Activated CD4-positive, alpha-beta memory T cell treated with anti-CD3 and anti-CD28 coated beads for 36 hours (primary cell): ENCODE measurements at regions of chr10 and their contacts with region 1.

Region 1: DNA sequence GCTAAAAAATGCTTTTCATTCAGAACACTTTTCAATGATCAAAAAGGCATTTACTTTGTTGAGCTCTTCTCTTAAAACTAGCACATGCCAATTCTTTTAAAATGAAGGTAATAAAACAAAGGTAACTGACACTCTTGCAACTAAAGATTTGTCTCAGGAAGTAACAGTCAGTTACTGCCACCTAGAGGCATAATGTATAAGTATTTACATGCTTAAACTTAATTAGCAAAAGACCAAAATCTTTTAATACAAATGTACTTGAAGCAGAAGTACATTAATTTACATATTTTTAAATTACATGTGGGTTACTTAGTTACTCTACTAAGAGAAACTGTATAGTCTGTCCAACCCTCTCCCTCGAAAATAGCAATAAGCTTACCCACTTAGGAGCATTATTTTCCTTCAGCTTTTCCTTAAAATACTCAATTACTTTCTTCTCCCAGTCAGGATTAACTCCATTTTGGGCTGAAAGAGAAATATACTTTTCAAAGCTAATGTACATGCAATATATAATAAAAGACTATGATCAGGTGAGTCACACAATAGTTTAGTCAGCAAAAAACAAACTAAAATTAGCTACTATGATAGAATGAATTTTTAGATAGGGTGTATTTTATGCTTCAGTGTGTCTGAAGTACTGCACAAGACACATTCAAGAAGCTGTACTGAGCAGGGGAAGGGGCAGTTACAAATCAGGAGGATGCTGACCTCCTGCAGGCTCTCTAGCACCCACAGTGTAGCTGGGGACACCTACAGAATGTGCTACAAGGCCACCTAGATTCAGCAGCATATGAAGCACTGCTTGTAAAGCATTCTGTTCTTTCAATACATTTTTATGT is 13.0 kb downstream of the MCMBP start:
- DNase-seq: no peak
- H3K4me3 Mint-ChIP-seq: no peak overlapping the region
- H3K27ac Mint-ChIP-seq: no peak overlapping the region
- H3K4me1 Mint-ChIP-seq: peaks cover 42% of the 10 kb centered on the region
- H3K27me3 Mint-ChIP-seq: no peaks in the 10 kb centered on the region

Region 2: DNA sequence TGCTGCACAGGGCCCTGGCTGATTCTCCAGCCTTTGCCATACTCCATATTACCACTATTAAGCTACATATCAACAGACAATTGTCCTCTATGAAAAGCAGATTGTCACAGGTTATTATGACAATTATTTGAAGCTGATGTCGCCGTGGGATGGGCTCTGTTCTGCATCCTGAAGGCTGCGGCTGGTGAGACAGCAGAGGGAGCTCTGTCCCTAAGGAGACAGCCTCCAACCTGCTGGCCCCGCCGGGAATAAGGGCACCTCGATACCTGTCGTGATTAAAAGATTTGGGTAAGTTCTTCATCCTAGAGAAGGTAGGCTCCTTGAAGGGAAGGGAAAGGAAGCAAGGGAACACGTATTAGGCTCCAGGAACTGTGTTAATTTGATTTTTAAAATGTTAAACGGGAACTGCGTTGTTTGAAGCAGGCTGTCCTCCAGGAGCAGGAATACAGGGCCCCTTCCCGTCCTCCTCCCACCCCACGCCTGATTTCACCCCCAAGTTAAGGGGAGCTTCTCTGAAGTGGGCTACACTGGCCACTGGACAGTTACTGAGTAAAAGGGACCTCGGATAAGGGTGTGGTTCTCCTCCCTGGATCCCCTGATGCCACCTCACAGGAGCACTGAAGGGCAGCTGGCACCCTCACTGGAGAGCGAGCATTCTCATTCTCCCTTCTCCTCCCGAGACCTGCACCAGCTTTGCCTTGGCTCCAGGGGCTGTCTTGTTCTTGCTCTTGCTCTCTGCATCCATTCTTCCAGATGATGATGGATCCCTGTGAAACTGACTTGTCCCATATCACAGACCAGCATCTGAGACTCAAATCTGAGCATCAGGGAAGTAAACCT is 251.1 kb before region 1 on chr10:
- CTCF ChIA-PET with region 1: no interaction called
- POLR2A ChIA-PET with region 1: no interaction called
- intact Hi-C with region 1: loop called (anchors 5 kb)
- DNase-seq: peak; percentile 49
- H3K4me3 Mint-ChIP-seq: no peak overlapping the region
- H3K27ac Mint-ChIP-seq: no peak overlapping the region
- H3K4me1 Mint-ChIP-seq: peaks cover 7% of the 10 kb centered on the region
- H3K27me3 Mint-ChIP-seq: peaks cover 3% of the 10 kb centered on the region

Region 3: GRCh38 chr10:119725828-119726675 is 133.6 kb before region 1 on chr10 and contains the start of gene INPP5F:
- CTCF ChIA-PET with region 1: interaction called, 21 read pairs
- POLR2A ChIA-PET with region 1: no interaction called
- intact Hi-C with region 1: no loop called
- DNase-seq: peak; percentile 100
- H3K4me3 Mint-ChIP-seq: peak within 1 kb of the TSS; percentile 91
- H3K27ac Mint-ChIP-seq: peak within 1 kb of the TSS; percentile 76
- H3K4me1 Mint-ChIP-seq: peaks cover 42% of the 10 kb centered on the region
- H3K27me3 Mint-ChIP-seq: no peaks in the 10 kb centered on the region
- total RNA-seq, gene INPP5F: 12.8 to 13.6 TPM

Region 4: GRCh38 chr10:119750391-119751230 is 109.0 kb before region 1 on chr10:
- CTCF ChIA-PET with region 1: interaction called, 108 read pairs
- POLR2A ChIA-PET with region 1: no interaction called
- intact Hi-C with region 1: loop called (anchors 1 kb)
- DNase-seq: peak; percentile 70
- H3K4me3 Mint-ChIP-seq: no peak overlapping the region
- H3K27ac Mint-ChIP-seq: no peak overlapping the region
- H3K4me1 Mint-ChIP-seq: peaks cover 12% of the 10 kb centered on the region
- H3K27me3 Mint-ChIP-seq: no peaks in the 10 kb centered on the region

Region 5: GRCh38 chr10:119803264-119803663 is 56.4 kb before region 1 on chr10:
- CTCF ChIA-PET with region 1: interaction called, 10 read pairs
- POLR2A ChIA-PET with region 1: no interaction called
- intact Hi-C with region 1: no loop called
- DNase-seq: no peak
- H3K4me3 Mint-ChIP-seq: no peak overlapping the region
- H3K27ac Mint-ChIP-seq: no peak overlapping the region
- H3K4me1 Mint-ChIP-seq: peaks cover 15% of the 10 kb centered on the region
- H3K27me3 Mint-ChIP-seq: no peaks in the 10 kb centered on the region

Region 6: DNA sequence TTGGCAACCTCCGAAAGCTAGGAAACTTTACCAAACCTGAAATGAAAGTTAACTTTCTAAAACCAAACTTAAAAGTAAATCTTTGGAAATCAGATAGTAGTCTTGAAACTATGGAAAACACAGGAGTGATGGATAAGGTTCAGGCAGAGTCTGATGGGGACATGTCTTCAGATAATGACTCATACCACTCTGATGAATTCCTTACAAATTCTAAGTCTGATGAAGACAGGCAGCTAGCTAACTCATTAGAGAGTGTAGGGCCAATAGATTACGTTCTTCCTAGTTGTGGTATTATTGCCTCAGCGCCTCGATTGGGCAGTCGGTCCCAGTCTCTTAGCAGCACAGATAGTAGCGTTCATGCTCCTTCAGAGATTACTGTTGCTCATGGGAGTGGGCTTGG is 32.9 kb before region 1 on chr10:
- CTCF ChIA-PET with region 1: no interaction called
- POLR2A ChIA-PET with region 1: no interaction called
- intact Hi-C with region 1: no loop called
- DNase-seq: no peak
- H3K4me3 Mint-ChIP-seq: no peak overlapping the region
- H3K27ac Mint-ChIP-seq: no peak overlapping the region
- H3K4me1 Mint-ChIP-seq: no peaks in the 10 kb centered on the region
- H3K27me3 Mint-ChIP-seq: no peaks in the 10 kb centered on the region

Region 7: DNA sequence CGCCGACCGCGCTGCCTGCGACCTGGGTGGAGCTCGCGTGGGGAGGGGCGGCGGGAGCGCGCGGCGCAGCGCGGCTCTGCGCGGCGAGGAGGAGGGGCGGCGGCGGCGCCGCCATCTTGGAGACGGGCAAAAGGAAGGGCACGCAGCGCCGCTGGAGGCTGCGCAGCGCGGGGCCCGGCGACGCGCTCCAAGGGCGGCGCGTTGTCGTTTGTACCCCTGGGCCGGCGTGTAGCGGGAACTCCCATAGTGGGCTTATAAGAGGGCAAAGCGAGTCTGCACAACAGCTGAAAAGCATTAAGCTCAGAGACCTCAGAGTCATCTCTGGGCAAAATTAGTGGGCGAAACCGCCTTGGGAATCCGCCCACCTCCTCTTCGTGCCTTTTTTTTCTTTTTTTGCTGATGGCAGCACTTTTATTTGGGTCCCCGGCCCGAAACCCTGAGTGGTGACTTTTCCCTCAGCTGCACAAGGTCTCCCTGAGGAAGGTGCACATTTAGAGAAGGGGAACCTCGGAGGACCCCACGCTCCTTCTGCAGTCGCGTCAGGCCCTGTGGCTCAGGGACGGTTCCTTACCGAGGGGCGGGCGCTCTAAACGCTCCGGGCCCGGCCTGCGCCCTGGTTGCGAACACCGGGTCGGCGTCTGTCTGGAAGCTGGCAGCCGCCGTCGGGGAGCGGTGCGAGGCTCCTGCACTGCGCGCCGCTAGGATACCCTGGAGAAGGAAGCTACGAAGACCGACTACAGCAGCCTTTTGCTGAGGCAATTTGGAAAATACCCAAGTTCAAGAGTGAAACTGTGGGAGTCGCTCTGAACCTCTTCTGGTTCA is 13.4 kb after region 1 on chr10:
- CTCF ChIA-PET with region 1: interaction called, 60 read pairs
- POLR2A ChIA-PET with region 1: interaction called, 31 read pairs
- intact Hi-C with region 1: loop called (anchors 1 kb)
- DNase-seq: peak; percentile 91
- H3K4me3 Mint-ChIP-seq: peak overlapping the region; percentile 80
- H3K27ac Mint-ChIP-seq: peak overlapping the region; percentile 87
- H3K4me1 Mint-ChIP-seq: peaks cover 31% of the 10 kb centered on the region
- H3K27me3 Mint-ChIP-seq: no peaks in the 10 kb centered on the region

Region 8: DNA sequence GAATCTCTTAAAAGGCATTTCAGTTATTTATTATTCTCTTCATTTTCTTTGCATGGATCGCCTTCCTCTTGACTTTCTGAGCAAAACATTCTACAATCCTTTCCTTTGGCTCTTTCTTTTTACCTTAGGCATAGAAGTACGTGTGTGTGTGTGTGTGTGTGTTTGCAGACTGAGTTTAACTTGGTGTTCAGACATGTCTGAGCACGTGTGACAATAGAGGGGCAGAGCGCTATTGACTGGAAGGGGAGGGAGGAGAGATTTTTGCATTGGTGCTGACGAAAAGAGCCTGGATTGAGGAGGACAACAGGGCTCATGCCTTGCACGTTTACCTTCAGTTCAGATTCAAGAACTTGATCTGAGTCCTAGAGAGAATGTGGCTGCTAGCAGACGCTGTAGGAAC is 162.7 kb after region 1 on chr10:
- CTCF ChIA-PET with region 1: no interaction called
- POLR2A ChIA-PET with region 1: no interaction called
- intact Hi-C with region 1: no loop called
- DNase-seq: no peak
- H3K4me3 Mint-ChIP-seq: no peak overlapping the region
- H3K27ac Mint-ChIP-seq: no peak overlapping the region
- H3K4me1 Mint-ChIP-seq: no peaks in the 10 kb centered on the region
- H3K27me3 Mint-ChIP-seq: peaks cover 10% of the 10 kb centered on the region